ENCODE measurements at regions of chr19 and their contacts with region 1.

Region 1: DNA sequence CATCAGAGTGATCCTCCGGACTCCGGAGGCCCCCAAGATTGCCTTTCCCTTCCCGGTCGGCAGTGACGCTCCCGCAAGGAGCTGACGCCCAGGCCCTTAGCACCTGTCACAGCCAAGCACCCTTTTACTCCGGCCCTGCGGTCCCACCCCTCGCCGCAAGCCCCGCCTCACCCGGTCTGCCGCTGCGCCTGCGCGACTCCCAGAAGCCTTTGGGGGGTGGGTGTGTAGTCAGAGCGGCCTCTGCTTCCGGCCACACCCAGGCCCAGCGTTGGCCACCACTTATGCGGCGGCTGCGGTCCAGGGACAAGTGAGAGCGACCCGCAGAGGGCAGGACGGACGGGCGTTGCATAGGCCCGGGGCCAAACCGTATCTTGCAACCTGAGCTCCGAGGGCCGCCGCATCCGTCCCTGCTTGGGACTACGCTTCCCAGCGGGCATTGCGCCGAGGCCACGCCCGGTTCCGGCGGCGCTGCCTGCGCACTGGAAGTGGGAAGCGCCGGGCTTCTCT is 441 bp upstream of the ZFP28 start:
- DNase-seq: peak; percentile 93
- H3K4me3 ChIP-seq: peak overlapping the region; percentile 63 to 97 (median 66)
- H3K27ac ChIP-seq: peak overlapping the region; percentile 63
- H3K4me1 ChIP-seq: peaks cover 9% of the 10 kb centered on the region
- H3K27me3 ChIP-seq: no peaks in the 10 kb centered on the region
- CTCF ChIP-seq: no peak
- POLR2A ChIP-seq: no peak

Region 2: GRCh38 chr19:56393119-56394012 is 144.9 kb before region 1 on chr19 and contains the start of gene ZNF582:
- CTCF ChIA-PET with region 1: no interaction called
- POLR2A ChIA-PET with region 1: no interaction called
- dilution Hi-C with region 1: no loop called
- intact Hi-C with region 1: loop called (anchors 1 kb)
- DNase-seq: peak; percentile 94
- H3K4me3 ChIP-seq: peak within 1 kb of the TSS in 2 of 3 experiments; percentile 17 to 64
- H3K27ac ChIP-seq: peak within 1 kb of the TSS; percentile 26
- H3K4me1 ChIP-seq: no peaks in the 10 kb centered on the region
- H3K27me3 ChIP-seq: no peaks in the 10 kb centered on the region
- CTCF ChIP-seq: peak; percentile 75 to 87
- POLR2A ChIP-seq: peak; percentile 70
- total RNA-seq, gene ZNF582: 2.2 and 2.9 TPM in 2 replicates

Region 3: GRCh38 chr19:56507446-56508289 is 30.6 kb before region 1 on chr19 and contains the start of gene ZNF471:
- CTCF ChIA-PET with region 1: no interaction called
- POLR2A ChIA-PET with region 1: no interaction called
- dilution Hi-C with region 1: no loop called
- intact Hi-C with region 1: loop called (anchors 1 kb)
- DNase-seq: peak; percentile 99
- H3K4me3 ChIP-seq: peak within 1 kb of the TSS; percentile 44 to 78 (median 61)
- H3K27ac ChIP-seq: peak within 1 kb of the TSS; percentile 70
- H3K4me1 ChIP-seq: peaks cover 3% of the 10 kb centered on the region
- H3K27me3 ChIP-seq: no peaks in the 10 kb centered on the region
- CTCF ChIP-seq: no peak
- POLR2A ChIP-seq: no peak
- total RNA-seq, gene ZNF471: 2.0 and 3.1 TPM in 2 replicates

Region 4: DNA sequence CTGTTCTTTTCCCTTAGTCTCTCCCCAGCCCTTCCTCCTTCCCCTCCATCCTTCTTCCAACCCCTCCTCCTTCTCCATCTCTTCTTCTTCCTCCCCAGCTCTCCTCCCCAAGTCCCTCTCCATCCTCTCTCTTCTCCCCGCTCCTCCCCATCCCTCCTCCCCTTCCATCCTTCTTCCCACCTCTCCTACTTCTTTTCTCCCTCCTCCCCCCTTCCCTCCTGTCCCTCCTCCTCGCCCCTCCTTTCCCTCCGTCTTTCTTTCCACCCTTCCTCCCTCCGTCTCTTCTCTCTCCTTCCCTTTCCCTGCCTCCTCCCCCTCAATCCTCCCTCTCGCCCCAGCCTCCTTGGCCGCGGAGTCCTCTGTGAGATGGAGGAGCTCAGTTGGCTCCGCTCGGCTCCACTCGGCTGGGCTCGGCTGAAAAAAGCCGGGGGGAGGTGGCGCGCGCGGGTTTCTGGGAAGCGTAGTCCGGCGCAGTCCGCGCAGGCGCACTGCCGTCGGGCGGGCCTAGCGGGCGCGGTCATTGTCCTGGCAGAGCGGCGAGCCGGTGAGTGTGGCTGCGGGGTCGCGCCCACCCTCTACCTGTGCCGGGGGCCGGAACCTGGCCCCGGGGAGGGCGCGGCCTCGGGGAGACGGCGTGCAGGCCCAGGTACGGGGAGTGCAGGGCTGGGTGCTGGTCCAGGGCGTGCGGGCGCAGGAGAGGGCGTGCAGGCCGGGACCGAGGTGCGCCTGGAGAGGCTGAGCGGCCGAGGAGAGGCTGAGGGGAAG is 56.7 kb after region 1 on chr19 and contains the start of gene ZNF71:
- CTCF ChIA-PET with region 1: no interaction called
- POLR2A ChIA-PET with region 1: no interaction called
- dilution Hi-C with region 1: no loop called
- intact Hi-C with region 1: loop called (anchors 2 kb)
- DNase-seq: peak; percentile 86
- H3K4me3 ChIP-seq: peak within 1 kb of the TSS; percentile 28 to 94 (median 67)
- H3K27ac ChIP-seq: no peak within 1 kb of the TSS
- H3K4me1 ChIP-seq: peaks cover 9% of the 10 kb centered on the region
- H3K27me3 ChIP-seq: no peaks in the 10 kb centered on the region
- CTCF ChIP-seq: no peak
- POLR2A ChIP-seq: no peak
- total RNA-seq, gene ZNF71: 9.6 and 9.7 TPM in 2 replicates

Measured in endothelial cell of umbilical vein (primary cell).